RWPE1 (cell line): ENCODE measurements at regions of chr5 and their contacts with region 1.

Region 1: GRCh38 chr5:57298295-57298984 is 124.6 kb downstream of the GPBP1 start:
- DNase-seq: peak; percentile 76
- H3K27ac ChIP-seq: no peak overlapping the region
- CTCF ChIP-seq: peak; percentile 92

Region 2: GRCh38 chr5:56816541-56817081 is 481.8 kb before region 1 on chr5:
- CTCF ChIA-PET with region 1: no interaction called
- POLR2A ChIA-PET with region 1: no interaction called
- DNase-seq: peak; percentile 59
- H3K27ac ChIP-seq: peak overlapping the region; percentile 87
- CTCF ChIP-seq: no peak

Region 3: GRCh38 chr5:57032151-57032551 is 266.3 kb before region 1 on chr5:
- CTCF ChIA-PET with region 1: no interaction called
- POLR2A ChIA-PET with region 1: no interaction called
- DNase-seq: peak; percentile 72
- H3K27ac ChIP-seq: no peak overlapping the region
- CTCF ChIP-seq: no peak

Region 4: GRCh38 chr5:57650360-57651069 is 352.1 kb after region 1 on chr5:
- CTCF ChIA-PET with region 1: interaction called, 16 read pairs
- POLR2A ChIA-PET with region 1: no interaction called
- DNase-seq: peak; percentile 52
- H3K27ac ChIP-seq: no peak overlapping the region
- CTCF ChIP-seq: peak; percentile 79